ENCODE measurements at regions of chr12 and their contacts with region 1.

Region 1: DNA sequence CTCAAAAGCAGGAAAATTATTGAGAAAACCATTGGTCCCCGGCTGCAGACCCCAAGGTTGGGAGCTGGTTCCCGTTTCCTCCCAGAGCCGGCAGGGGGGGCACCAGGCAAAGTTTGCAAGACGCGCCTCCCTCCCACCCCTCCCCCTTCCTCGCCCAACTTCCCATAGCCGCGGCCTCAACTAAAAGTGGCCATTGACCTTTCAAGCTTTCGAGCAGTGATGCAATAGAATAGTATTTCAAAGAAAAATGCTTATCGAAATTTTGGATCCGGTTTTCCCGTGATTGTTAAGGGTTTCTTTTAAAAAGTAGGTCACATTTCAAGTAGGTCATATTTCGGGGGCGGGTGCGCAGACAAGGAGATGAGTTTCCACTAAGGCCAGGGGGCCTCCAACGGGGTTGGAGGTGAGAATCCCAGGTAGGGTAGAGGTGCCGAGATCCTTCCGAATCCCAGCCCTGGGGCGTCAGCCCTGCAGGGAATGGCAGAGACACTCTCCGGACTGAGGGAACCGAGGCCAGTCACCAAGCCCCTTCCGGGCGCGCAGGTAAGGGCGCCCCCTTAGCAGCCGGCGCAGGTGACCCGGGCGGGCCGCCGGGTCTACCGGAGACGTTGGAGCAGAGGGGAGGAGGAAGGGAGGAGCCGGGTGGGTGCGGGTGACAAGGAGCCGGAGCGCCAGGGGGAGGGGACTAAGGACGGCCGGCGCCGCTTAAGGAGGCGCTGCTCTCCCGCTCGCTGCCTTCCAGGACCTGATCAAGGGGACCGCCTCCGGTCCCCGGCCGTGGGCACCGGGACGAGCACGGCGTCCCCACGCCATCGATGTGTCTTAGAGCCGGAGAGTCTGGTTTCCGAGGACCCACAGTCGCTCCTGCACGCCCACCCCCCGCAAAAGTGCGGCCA is 2.6 kb upstream of the SOCS2 start:
- DNase-seq: peak; percentile 95
- H3K4me3 ChIP-seq: peak overlapping the region; percentile 68 to 85 (median 80)
- H3K27ac ChIP-seq: peak overlapping the region; percentile 90 to 98 (median 97)
- H3K4me1 ChIP-seq: peaks cover 0 to 18% (median 8%) of the 10 kb centered on the region in 4 donors
- H3K27me3 ChIP-seq: no peaks in the 10 kb centered on the region
- CTCF ChIP-seq: peak; percentile 62 to 85 (median 70)
- EP300 ChIP-seq: no peak
- POLR2A ChIP-seq: no peak

Region 2: GRCh38 chr12:93677195-93678064 is 107.5 kb after region 1 on chr12 and contains the start of gene CRADD:
- intact Hi-C with region 1: loop called (anchors 2 kb)
- DNase-seq: peak; percentile 92
- H3K4me3 ChIP-seq: peak within 1 kb of the TSS; percentile 61 to 74 (median 68)
- H3K27ac ChIP-seq: peak within 1 kb of the TSS; percentile 90 to 97 (median 94)
- H3K4me1 ChIP-seq: peaks cover 0 to 42% (median 31%) of the 10 kb centered on the region in 4 donors
- H3K27me3 ChIP-seq: no peaks in the 10 kb centered on the region
- CTCF ChIP-seq: no peak
- EP300 ChIP-seq: peak in 2 of 4 donors; percentile 3 to 50
- POLR2A ChIP-seq: peak; percentile 51 to 72
- total RNA-seq, gene CRADD: 43.7 to 98.9 (median 61.0) TPM

Region 3: GRCh38 chr12:93813972-93814821 is 244.3 kb after region 1 on chr12:
- intact Hi-C with region 1: loop called (anchors 2 kb)
- DNase-seq: peak; percentile 97
- H3K4me3 ChIP-seq: no peak overlapping the region
- H3K27ac ChIP-seq: peak overlapping the region; percentile 85 to 91 (median 90)
- H3K4me1 ChIP-seq: peaks cover 0 to 78% (median 67%) of the 10 kb centered on the region in 4 donors
- H3K27me3 ChIP-seq: no peaks in the 10 kb centered on the region
- CTCF ChIP-seq: no peak
- EP300 ChIP-seq: peak; percentile 71 to 95 (median 88)
- POLR2A ChIP-seq: no peak

Region 4: DNA sequence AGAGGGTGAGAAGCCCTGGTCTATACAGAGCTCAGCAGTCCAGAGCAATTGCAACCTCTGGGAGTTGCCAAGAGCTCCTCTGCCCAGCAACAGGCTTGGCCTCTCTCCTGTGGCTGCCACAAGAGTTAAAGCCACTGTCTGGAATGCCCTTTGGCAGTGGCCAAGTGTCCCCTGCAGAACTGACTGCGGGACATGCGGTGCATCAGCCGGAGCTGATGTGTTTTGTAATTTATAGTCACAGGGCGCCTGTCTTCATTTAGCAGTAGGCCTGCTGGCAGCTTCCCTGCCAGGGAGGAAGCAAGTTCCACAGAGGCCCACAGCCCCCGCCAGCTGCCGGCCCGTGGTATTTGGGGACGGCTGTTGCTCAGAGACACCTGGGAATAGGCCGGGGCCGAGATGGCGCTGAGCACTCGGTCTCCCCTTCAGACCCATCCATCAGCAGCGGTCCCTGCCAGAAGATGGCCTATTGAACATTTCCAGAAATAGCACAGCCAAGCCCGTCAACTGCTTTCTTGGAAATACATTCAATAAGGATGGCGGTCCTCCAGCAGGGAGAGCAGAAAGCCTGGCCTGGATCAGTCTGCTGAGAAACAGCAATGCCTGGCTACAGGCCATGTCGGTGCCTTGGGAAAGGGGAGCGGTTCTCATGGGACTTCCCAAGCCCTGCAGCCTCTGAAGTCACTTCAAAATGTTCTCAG is 324.6 kb after region 1 on chr12:
- intact Hi-C with region 1: loop called (anchors 10 kb)
- DNase-seq: peak; percentile 94
- H3K4me3 ChIP-seq: peak overlapping the region in 3 of 4 donors; percentile 24 to 29 (median 28)
- H3K27ac ChIP-seq: peak overlapping the region; percentile 76 to 88 (median 80)
- H3K4me1 ChIP-seq: peaks cover 0 to 35% (median 32%) of the 10 kb centered on the region in 4 donors
- H3K27me3 ChIP-seq: no peaks in the 10 kb centered on the region
- CTCF ChIP-seq: no peak
- EP300 ChIP-seq: peak in 1 of 4 donors; percentile 42
- POLR2A ChIP-seq: no peak

Region 5: DNA sequence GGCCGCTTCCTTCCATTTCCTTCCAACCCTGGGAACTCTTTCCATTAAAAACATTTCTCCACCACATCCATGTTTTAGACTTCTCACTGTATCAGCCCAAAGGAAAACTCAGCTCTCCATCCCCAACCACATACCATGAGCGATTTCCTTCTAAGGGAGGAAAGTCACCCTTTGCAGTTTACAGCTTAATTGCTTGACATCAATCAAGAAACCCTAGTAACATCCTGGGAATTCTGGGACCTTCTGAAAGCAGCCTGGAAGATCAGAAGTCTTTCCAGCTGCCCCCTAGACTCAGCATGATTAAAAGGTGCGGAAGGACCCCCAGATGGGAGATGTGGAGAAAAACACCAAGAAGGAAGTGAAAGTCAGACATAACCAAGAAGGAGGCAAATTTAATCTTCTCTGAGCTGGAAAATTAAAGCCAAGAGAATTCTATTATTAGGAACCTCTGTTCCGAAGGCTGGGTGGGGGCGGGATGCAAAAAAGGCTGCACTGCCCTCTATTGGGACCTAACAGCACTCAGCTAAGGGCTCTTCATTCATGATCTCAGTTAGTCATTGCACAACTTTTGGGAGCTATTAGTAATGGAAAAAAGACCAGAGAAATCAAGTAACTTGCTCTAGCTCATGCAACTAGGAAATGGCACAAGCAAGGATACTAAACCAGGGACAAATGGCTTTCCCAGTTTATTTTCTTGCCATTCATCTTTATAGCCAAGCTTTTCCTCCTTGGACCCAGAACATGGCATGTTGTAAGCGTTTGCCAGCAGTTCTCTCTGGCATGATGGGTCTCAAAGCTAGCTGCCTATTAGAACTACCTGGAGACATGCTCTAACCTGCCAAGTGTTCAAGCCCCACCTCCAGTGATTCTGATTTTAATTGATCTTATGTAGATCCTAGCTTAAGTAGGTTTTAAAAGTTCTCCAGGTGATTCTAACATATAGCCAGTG is 505.4 kb after region 1 on chr12:
- intact Hi-C with region 1: loop called (anchors 2 kb)
- DNase-seq: peak; percentile 90
- H3K4me3 ChIP-seq: no peak overlapping the region
- H3K27ac ChIP-seq: peak overlapping the region; percentile 64 to 80 (median 70)
- H3K4me1 ChIP-seq: peaks cover 0 to 25% (median 17%) of the 10 kb centered on the region in 4 donors
- H3K27me3 ChIP-seq: no peaks in the 10 kb centered on the region
- CTCF ChIP-seq: peak; percentile 46 to 60 (median 52)
- EP300 ChIP-seq: peak in 1 of 4 donors; percentile 61
- POLR2A ChIP-seq: no peak